GM18951 (cell line): ENCODE measurements at regions of chr15 and their contacts with region 1.

Region 1: DNA sequence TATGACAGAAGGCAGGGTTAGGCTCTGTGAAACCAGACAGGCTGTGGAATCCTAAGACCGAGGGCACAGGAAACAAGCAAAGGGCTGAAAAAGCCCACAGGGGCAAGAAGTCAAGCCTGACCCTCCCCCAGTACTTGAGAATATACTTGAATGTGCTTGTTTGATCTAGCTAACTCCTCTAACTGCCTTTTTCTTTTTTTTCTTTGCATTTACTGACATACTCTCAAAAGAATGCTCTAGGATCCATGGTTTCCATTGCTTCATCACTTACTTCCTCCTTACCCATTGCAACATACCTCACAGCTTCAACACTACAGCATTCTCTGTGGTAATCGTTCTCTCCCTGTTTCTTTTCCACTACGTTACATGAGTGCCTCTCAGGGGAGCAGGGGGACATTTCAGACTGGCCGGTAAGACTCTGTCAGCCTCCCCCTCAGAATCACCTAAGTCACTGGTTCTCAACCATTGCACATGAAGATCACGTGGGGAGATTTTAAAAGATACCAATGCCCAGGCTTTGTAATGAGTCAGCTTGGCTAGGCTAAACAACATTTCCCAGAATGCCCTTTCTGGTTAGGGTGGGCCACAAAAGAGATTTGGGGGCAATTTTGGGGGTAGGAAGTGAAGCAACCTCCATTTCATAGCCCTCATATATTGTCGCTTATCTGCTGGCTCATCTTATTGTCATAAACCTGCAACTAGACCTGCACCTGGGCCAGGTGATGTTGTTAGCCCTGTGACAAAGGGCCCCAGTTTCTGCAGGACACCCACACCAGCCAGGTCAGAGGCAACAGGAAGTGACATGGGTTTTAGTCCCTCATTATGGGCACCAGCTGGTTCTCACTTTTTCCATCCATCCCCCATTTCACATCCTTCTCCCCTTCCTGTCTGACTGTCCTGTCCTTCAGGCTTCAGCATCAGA is 24.6 kb upstream of the RSL24D1 start:
- POLR2A ChIP-seq: no peak

Region 2: GRCh38 chr15:53976844-53977392 is 1244.4 kb before region 1 on chr15:
- in situ Hi-C with region 1: no loop called
- POLR2A ChIP-seq: no peak

Region 3: DNA sequence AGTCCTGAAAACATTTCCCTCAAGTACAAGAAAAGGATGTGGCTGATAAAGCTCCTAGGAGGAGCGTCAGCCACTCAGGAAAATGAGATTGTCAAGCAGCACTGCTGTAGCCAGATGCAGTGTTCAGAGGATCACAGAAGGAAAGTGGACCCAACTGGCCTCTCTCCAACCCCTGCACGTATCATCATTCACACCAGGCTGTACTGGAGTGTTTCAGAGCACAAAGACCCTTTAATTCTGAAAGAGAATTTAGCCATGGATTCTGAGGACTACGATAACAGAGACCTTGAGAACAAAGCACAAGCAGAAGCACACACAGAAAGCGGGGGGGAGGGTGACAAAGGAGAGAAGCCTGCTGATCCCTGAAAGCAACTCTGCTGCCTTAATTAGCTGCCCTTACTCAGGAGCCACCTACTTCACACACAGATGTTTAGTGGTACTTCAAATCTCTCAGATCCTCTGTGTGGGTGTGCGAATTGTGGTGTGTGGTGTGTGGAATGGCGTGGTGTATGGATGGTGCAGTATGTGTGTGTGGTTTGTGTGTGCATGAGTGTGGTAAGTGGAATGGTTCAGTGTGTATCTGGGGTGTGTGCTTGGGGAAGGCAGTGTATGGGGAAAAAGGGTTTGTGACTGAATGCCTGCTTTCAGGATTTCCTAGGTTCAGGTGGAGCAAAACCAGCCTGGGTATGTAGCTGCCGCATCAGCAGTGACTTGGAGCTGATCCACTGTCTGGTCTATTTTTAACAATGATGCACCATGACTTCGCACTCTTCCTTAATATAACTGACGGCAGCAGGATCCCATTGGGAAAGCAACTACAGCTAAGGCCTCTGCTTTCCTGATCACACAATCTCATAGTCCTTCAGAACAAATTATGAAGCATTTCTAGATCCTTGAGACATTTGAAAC is 217.1 kb before region 1 on chr15:
- in situ Hi-C with region 1: no loop called
- POLR2A ChIP-seq: no peak

Region 4: DNA sequence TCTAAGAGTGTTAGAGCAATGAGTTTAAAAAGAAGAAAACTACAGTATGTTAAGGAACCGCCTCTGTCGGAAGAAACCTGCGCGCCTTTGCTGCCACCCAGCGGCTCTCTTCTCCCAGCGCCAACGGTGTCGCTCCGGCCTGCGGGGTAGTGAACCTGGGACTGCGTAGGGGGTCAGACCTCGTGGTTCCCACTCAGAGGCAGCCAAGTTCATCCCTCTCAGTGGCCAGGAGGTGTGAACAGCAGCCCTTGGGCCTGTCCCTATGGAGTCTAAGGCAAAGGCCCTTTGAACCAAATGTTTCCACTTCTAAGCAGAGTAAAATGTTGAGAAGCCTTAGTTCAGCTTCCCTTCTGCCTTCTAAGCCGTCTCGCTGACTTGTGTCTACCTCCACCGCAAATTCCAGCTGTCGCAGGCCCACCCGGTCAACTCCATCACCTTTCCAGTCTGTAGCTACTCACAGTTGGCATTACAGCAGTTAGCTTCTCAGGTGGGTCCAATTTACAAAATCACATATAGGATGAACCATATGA is 69.2 kb after region 1 on chr15:
- in situ Hi-C with region 1: loop called (anchors 5 kb)
- POLR2A ChIP-seq: no peak

Region 5: GRCh38 chr15:55434989-55435825 is 213.9 kb after region 1 on chr15:
- in situ Hi-C with region 1: loop called (anchors 10 kb)
- POLR2A ChIP-seq: no peak